Endothelial cell of umbilical vein (primary cell): ENCODE measurements at regions of chr2 and their contacts with region 1.

Region 1: DNA sequence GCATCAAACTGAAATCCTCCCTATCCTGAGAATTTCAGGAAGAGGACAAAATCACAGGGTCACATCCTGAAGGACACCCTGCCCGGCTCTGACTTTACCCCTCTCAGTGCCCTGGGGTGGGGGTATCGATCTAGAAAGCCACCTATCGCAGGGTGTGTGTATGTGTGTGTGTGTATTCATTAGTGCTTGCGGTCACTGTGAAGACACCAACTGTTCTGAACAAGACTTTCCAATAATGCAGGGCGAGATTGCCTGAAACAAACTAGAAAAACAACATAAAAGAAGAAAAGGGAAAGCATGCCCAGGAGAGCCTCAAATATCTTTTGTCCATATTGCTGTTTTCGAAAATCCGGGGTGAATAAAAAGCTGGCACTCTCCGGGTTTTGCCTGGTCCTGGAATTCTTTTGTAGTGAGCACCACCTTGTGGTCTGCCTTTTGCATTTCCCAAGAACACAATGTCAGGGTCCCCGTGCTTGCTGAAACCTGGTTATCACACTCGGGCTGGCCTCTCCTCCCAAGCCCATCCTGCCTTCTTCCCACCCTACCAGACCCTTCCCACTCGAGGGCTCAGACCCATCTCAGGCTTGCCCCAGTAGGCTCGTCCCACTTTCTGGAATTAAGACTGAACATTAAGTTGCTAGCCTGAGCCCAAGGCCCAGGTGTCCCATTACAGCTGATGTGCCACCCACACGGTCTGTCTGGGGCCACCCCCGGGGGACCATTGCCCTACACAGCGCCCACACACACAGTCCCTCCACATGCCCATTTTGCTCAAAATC is 25.0 kb upstream of the COPS8 start:
- DNase-seq: peak; percentile 77
- H3K4me3 ChIP-seq: peak overlapping the region in 1 of 3 experiments; percentile 11
- H3K27ac ChIP-seq: peak overlapping the region; percentile 9
- H3K4me1 ChIP-seq: peaks cover 7% of the 10 kb centered on the region
- H3K27me3 ChIP-seq: no peaks in the 10 kb centered on the region
- CTCF ChIP-seq: peak; percentile 65 to 67
- POLR2A ChIP-seq: no peak

Region 2: DNA sequence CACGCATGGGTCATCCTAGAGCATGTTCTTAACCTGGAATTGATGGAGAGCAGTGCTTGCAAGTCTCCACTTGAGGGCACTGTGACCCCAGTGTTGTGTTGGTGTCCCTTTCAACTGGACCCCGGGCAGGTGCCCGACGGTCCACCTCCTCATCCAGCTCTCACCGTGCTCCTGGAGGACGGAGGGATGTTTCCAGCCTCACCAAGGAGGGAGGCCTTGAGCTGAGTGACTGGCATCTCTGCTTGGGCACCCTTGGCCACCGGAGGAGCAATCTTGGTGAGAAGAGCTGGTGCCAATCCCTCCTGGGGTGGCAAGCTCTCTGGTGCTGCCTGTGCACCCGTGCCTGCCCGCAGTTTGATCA is 751.1 kb before region 1 on chr2:
- CTCF ChIA-PET with region 1: interaction called, 14 read pairs
- POLR2A ChIA-PET with region 1: no interaction called
- dilution Hi-C with region 1: no loop called
- intact Hi-C with region 1: no loop called
- DNase-seq: peak; percentile 39
- H3K4me3 ChIP-seq: no peak overlapping the region
- H3K27ac ChIP-seq: no peak overlapping the region
- H3K4me1 ChIP-seq: no peaks in the 10 kb centered on the region
- H3K27me3 ChIP-seq: no peaks in the 10 kb centered on the region
- CTCF ChIP-seq: peak; percentile 61 to 76
- POLR2A ChIP-seq: no peak

Region 3: GRCh38 chr2:236343400-236344161 is 717.1 kb before region 1 on chr2:
- CTCF ChIA-PET with region 1: interaction called, 67 read pairs
- POLR2A ChIA-PET with region 1: no interaction called
- dilution Hi-C with region 1: loop called (anchors 10 kb)
- intact Hi-C with region 1: loop called (anchors 1 kb)
- DNase-seq: peak; percentile 65
- H3K4me3 ChIP-seq: no peak overlapping the region
- H3K27ac ChIP-seq: no peak overlapping the region
- H3K4me1 ChIP-seq: no peaks in the 10 kb centered on the region
- H3K27me3 ChIP-seq: no peaks in the 10 kb centered on the region
- CTCF ChIP-seq: peak; percentile 72 to 78
- POLR2A ChIP-seq: no peak

Region 4: GRCh38 chr2:236352761-236353593 is 707.7 kb before region 1 on chr2:
- CTCF ChIA-PET with region 1: interaction called, 67 read pairs
- POLR2A ChIA-PET with region 1: no interaction called
- dilution Hi-C with region 1: loop called (anchors 10 kb)
- intact Hi-C with region 1: loop called (anchors 1 kb)
- DNase-seq: peak; percentile 44
- H3K4me3 ChIP-seq: no peak overlapping the region
- H3K27ac ChIP-seq: no peak overlapping the region
- H3K4me1 ChIP-seq: no peaks in the 10 kb centered on the region
- H3K27me3 ChIP-seq: no peaks in the 10 kb centered on the region
- CTCF ChIP-seq: peak; percentile 60 to 61
- POLR2A ChIP-seq: no peak

Region 5: GRCh38 chr2:236576087-236576486 is 484.6 kb before region 1 on chr2:
- CTCF ChIA-PET with region 1: interaction called, 19 read pairs
- POLR2A ChIA-PET with region 1: no interaction called
- dilution Hi-C with region 1: no loop called
- intact Hi-C with region 1: loop called (anchors 1 kb)
- DNase-seq: peak; percentile 77
- H3K4me3 ChIP-seq: no peak overlapping the region
- H3K27ac ChIP-seq: peak overlapping the region; percentile 9
- H3K4me1 ChIP-seq: peaks cover 59% of the 10 kb centered on the region
- H3K27me3 ChIP-seq: no peaks in the 10 kb centered on the region
- CTCF ChIP-seq: peak; percentile 11 to 48
- POLR2A ChIP-seq: no peak